Sigmoid colon (tissue), 7 donors: ENCODE measurements at regions of chrX and their contacts with region 1.

Region 1: DNA sequence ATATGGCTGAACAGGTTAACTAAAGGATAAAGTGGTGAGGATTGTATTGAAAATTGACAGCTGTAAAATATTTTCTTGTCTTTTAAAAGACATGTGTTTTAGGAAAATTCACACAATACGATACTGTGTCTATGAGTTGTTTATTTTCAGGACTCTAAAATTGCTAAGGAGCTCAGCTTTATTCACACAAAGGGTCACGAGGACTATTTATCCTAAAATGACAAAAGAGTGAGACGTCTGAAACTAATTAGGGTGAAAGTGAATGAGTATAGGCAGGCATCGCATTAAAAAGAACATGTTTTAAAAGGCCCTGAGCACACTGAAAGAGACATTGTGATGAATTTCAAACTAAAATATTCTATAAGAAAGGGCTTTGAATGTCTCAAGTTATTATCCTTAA is 304.7 kb downstream of the SH2D1A start:
- DNase-seq: no peak
- H3K4me3 ChIP-seq: no peak overlapping the region
- H3K27ac ChIP-seq: no peak overlapping the region
- H3K4me1 ChIP-seq: no peaks in the 10 kb centered on the region
- H3K27me3 ChIP-seq: no peaks in the 10 kb centered on the region
- CTCF ChIP-seq: no peak
- EP300 ChIP-seq: no peak
- POLR2A ChIP-seq: no peak

Region 2: GRCh38 chrX:123924186-123924585 is 726.8 kb before region 1 on chrX:
- intact Hi-C with region 1: no loop called
- DNase-seq: no peak
- H3K4me3 ChIP-seq: no peak overlapping the region
- H3K27ac ChIP-seq: no peak overlapping the region
- H3K4me1 ChIP-seq: no peaks in the 10 kb centered on the region
- H3K27me3 ChIP-seq: no peaks in the 10 kb centered on the region
- CTCF ChIP-seq: no peak
- EP300 ChIP-seq: no peak
- POLR2A ChIP-seq: no peak

Region 3: DNA sequence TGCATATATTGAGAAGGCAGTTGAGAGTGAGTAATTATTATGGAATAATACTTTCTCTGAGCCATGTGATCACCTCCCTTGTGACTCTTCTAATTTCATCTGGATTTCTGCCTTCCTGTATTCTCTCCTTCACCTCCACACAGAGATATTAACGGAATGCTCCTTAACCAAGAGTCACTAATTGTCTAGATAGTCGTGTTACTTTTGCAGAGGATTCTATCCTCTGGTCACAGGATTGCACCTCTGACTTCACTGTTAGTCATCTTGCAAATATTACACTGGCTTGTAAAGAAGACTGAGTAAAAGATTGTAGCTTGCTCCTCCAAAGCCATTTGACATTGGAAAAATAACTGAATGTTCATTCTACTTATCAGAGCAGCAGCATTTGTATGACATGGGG is 143.8 kb before region 1 on chrX:
- intact Hi-C with region 1: no loop called
- DNase-seq: no peak
- H3K4me3 ChIP-seq: no peak overlapping the region
- H3K27ac ChIP-seq: no peak overlapping the region
- H3K4me1 ChIP-seq: no peaks in the 10 kb centered on the region
- H3K27me3 ChIP-seq: no peaks in the 10 kb centered on the region
- CTCF ChIP-seq: no peak
- EP300 ChIP-seq: no peak
- POLR2A ChIP-seq: no peak

Region 4: GRCh38 chrX:124679199-124679598 is 28.2 kb after region 1 on chrX:
- intact Hi-C with region 1: loop called (anchors 2 kb)
- DNase-seq: no peak
- H3K4me3 ChIP-seq: no peak overlapping the region
- H3K27ac ChIP-seq: no peak overlapping the region
- H3K4me1 ChIP-seq: no peaks in the 10 kb centered on the region
- H3K27me3 ChIP-seq: no peaks in the 10 kb centered on the region
- CTCF ChIP-seq: no peak
- EP300 ChIP-seq: no peak
- POLR2A ChIP-seq: no peak